Tibial artery (tissue), 4 donors: ENCODE measurements at regions of chr12 and their contacts with region 1.

Region 1: GRCh38 chr12:118372541-118373495 is at the start of gene TAOK3:
- DNase-seq: peak; percentile 100
- H3K4me3 ChIP-seq: peak within 1 kb of the TSS; percentile 83 to 93
- H3K27ac ChIP-seq: peak within 1 kb of the TSS; percentile 72 to 88
- H3K4me1 ChIP-seq: peaks cover 5 to 60% (median 38%) of the 10 kb centered on the region in 4 donors
- H3K27me3 ChIP-seq: no peaks in the 10 kb centered on the region
- CTCF ChIP-seq: no peak

Region 2: GRCh38 chr12:117874842-117875434 is 497.9 kb before region 1 on chr12:
- intact Hi-C with region 1: loop called (anchors 10 kb)
- DNase-seq: peak; percentile 63 to 74
- H3K4me3 ChIP-seq: no peak overlapping the region
- H3K27ac ChIP-seq: no peak overlapping the region
- H3K4me1 ChIP-seq: no peaks in the 10 kb centered on the region
- H3K27me3 ChIP-seq: peaks cover 0 to 21% of the 10 kb centered on the region in 2 donors
- CTCF ChIP-seq: peak; percentile 75 to 82

Region 3: DNA sequence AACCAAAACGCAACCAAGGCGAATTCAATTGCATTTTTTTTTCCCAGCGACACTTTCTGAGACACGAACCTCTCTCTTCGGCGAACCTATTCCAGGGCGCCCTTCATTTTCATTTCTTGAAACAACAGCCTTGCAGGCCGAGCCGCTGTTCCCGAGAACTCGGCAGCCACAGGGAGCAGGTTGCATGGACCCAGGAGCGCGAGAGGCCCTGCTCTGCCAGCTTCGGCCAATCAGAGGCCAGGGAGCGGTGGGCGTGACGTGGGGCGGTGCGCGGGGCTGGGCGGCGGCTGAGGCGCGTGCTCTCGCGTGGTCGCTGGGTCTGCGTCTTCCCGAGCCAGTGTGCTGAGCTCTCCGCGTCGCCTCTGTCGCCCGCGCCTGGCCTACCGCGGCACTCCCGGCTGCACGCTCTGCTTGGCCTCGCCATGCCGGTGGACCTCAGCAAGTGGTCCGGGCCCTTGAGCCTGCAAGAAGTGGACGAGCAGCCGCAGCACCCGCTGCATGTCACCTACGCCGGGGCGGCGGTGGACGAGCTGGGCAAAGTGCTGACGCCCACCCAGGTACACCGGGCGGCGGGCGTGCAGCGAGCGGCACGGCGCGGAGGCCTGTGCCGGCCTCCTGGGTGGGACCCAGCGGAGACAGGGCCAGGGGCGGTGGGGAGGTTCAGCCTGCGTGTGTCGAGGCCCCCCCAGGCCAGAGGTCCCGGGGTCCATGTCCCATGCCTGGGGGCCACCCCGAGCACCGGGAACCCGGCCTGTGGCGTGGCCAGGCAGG is 236.8 kb before region 1 on chr12 and contains the start of gene PEBP1:
- intact Hi-C with region 1: loop called (anchors 10 kb)
- DNase-seq: peak; percentile 95 to 98
- H3K4me3 ChIP-seq: peak within 1 kb of the TSS; percentile 88 to 99
- H3K27ac ChIP-seq: peak within 1 kb of the TSS; percentile 89 to 95
- H3K4me1 ChIP-seq: peaks cover 0 to 33% (median 21%) of the 10 kb centered on the region in 4 donors
- H3K27me3 ChIP-seq: no peaks in the 10 kb centered on the region
- CTCF ChIP-seq: peak in 1 of 2 experiments; percentile 3

Region 4: GRCh38 chr12:118183705-118184104 is 189.1 kb before region 1 on chr12:
- intact Hi-C with region 1: loop called (anchors 2 kb)
- DNase-seq: no peak
- H3K4me3 ChIP-seq: no peak overlapping the region
- H3K27ac ChIP-seq: no peak overlapping the region
- H3K4me1 ChIP-seq: peaks cover 0 to 24% (median 11%) of the 10 kb centered on the region in 4 donors
- H3K27me3 ChIP-seq: no peaks in the 10 kb centered on the region
- CTCF ChIP-seq: no peak